ENCODE measurements at regions of chr2 and their contacts with region 1.

Region 1: GRCh38 chr2:219029829-219030165 is 11.5 kb downstream of the CFAP65 start:
- DNase-seq: peak; percentile 80
- H3K4me3 Mint-ChIP-seq: no peak overlapping the region
- H3K27ac Mint-ChIP-seq: no peak overlapping the region
- H3K4me1 Mint-ChIP-seq: no peaks in the 10 kb centered on the region
- H3K27me3 Mint-ChIP-seq: peaks cover 32% of the 10 kb centered on the region
- CTCF ChIP-seq: peak; percentile 95

Region 2: DNA sequence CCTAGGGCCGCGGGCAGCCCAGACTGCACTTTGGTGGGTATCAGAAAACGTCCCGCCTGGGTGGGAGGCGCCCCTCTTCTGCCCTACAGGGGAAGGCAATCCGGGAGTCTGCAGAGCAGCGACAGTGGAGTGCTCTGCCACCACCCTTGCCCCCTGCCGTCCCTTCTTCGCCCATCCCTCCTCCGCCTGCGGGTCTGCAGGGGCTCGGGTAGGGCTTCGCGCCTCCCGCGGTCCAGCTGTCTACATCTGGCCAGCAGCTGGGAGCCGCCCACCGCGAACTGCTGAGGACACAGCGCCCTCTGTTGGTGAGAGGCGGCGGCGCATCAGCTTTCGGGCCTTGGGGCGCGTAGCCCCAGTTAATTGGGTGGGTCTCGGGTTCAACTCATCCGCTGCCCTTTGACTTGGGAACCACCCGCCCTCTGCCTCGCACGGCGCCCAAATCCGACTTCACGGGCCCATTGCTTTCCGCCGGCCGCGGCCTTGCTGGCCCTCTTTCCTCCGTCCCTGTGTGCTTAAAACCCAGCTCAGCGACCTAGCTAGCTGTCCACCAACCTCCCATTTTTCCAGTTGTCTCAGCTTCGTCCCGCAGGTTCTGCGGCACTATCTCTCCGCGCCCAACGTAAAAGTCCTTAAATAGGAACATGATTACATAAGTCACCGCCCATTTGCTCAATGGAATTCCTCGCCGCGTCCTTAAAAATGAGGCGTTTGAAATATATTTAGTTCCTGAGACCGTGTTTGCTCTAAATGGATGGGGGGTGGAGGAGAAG is 131.5 kb before region 1 on chr2:
- CTCF ChIA-PET with region 1: no interaction called
- POLR2A ChIA-PET with region 1: no interaction called
- intact Hi-C with region 1: no loop called
- DNase-seq: peak; percentile 53
- H3K4me3 Mint-ChIP-seq: no peak overlapping the region
- H3K27ac Mint-ChIP-seq: no peak overlapping the region
- H3K4me1 Mint-ChIP-seq: peaks cover 43% of the 10 kb centered on the region
- H3K27me3 Mint-ChIP-seq: peaks cover 23% of the 10 kb centered on the region
- CTCF ChIP-seq: peak; percentile 97

Region 3: GRCh38 chr2:218995972-218996711 is 33.7 kb before region 1 on chr2:
- CTCF ChIA-PET with region 1: interaction called, 10 read pairs
- POLR2A ChIA-PET with region 1: interaction called, 3 read pairs
- intact Hi-C with region 1: loop called (anchors 1 kb)
- DNase-seq: peak; percentile 82
- H3K4me3 Mint-ChIP-seq: peak overlapping the region; percentile 73
- H3K27ac Mint-ChIP-seq: no peak overlapping the region
- H3K4me1 Mint-ChIP-seq: peaks cover 15% of the 10 kb centered on the region
- H3K27me3 Mint-ChIP-seq: peaks cover 22% of the 10 kb centered on the region
- CTCF ChIP-seq: peak; percentile 84

Region 4: GRCh38 chr2:219041252-219041651 is 11.5 kb after region 1 on chr2 and contains the start of gene CFAP65:
- CTCF ChIA-PET with region 1: interaction called, 22 read pairs
- POLR2A ChIA-PET with region 1: interaction called, 4 read pairs
- intact Hi-C with region 1: no loop called
- DNase-seq: no peak
- H3K4me3 Mint-ChIP-seq: peak within 1 kb of the TSS; percentile 72
- H3K27ac Mint-ChIP-seq: no peak within 1 kb of the TSS
- H3K4me1 Mint-ChIP-seq: peaks cover 6% of the 10 kb centered on the region
- H3K27me3 Mint-ChIP-seq: peaks cover 86% of the 10 kb centered on the region
- CTCF ChIP-seq: no peak
- total RNA-seq, gene CFAP65: not detected in 2 replicates

Region 5: DNA sequence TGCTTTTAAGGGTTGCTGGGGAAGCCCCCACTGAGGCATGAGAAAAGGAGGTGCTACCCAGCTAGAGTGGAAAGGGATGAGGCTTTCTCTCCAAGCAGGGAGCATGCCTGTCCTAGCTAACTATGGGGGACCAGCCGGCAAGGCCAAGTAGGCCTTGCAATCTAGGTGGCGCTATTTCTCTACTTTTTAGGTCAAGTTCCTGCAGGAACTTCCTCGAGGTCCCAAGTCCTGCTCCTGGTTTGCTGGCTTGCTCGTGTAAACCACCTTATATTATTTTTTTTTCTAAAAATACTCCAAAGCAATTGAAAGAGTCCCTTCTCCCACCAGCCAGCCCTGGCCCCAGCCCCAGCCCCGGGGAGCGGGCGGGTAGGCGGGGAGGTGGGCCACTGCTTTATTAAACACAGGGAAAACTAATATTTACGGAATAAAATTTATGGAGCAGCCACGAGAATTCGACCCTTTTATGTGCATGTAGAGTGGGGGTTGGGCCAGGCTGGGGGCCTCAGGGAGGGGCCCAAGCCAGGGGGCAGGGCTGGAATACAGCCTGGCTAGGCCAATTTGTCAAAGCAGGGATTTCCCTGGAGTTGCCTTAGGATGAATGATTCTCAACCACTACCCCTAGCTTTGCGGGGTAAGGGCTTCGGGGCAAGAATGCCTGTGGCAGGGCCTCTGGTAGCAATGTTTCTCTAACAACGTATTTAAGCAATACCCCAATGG is 43.8 kb after region 1 on chr2:
- CTCF ChIA-PET with region 1: interaction called, 21 read pairs
- POLR2A ChIA-PET with region 1: no interaction called
- intact Hi-C with region 1: no loop called
- DNase-seq: peak; percentile 57
- H3K4me3 Mint-ChIP-seq: no peak overlapping the region
- H3K27ac Mint-ChIP-seq: peak overlapping the region; percentile 7
- H3K4me1 Mint-ChIP-seq: peaks cover 13% of the 10 kb centered on the region
- H3K27me3 Mint-ChIP-seq: no peaks in the 10 kb centered on the region
- CTCF ChIP-seq: peak; percentile 57

Region 6: GRCh38 chr2:219142329-219142728 is 112.5 kb after region 1 on chr2:
- CTCF ChIA-PET with region 1: interaction called, 35 read pairs
- POLR2A ChIA-PET with region 1: no interaction called
- intact Hi-C with region 1: no loop called
- DNase-seq: peak; percentile 88
- H3K4me3 Mint-ChIP-seq: no peak overlapping the region
- H3K27ac Mint-ChIP-seq: peak overlapping the region; percentile 44
- H3K4me1 Mint-ChIP-seq: peaks cover 27% of the 10 kb centered on the region
- H3K27me3 Mint-ChIP-seq: no peaks in the 10 kb centered on the region
- CTCF ChIP-seq: no peak

Region 7: GRCh38 chr2:219160186-219161017 is 130.6 kb after region 1 on chr2 and contains the start of gene NHEJ1:
- CTCF ChIA-PET with region 1: interaction called, 178 read pairs
- POLR2A ChIA-PET with region 1: interaction called, 8 read pairs
- intact Hi-C with region 1: loop called (anchors 1 kb)
- DNase-seq: peak; percentile 95
- H3K4me3 Mint-ChIP-seq: peak within 1 kb of the TSS; percentile 77
- H3K27ac Mint-ChIP-seq: peak within 1 kb of the TSS; percentile 37
- H3K4me1 Mint-ChIP-seq: peaks cover 14% of the 10 kb centered on the region
- H3K27me3 Mint-ChIP-seq: no peaks in the 10 kb centered on the region
- CTCF ChIP-seq: peak; percentile 96
- total RNA-seq, gene NHEJ1: 7.5 and 11.5 TPM in 2 replicates

Region 8: DNA sequence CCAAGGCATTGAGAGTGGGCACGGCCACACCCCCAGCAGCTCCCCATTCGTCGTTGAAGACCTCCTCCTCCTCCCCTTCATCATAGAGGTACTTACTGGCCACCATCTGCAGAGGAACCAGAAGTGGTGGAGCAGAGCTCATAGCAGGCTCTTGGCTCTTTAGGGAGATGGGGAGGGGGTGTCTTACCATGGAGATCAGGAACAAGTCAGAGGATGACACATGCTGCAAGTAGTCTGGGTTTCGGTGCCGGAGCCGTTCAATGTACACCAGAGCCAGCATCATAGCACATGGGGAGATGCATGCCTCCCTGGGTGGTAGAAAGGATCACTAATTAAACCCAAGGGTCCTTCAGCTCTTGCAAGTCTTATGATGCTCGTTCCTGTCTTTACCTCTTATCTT is 145.0 kb after region 1 on chr2:
- CTCF ChIA-PET with region 1: no interaction called
- POLR2A ChIA-PET with region 1: no interaction called
- intact Hi-C with region 1: no loop called
- DNase-seq: no peak
- H3K4me3 Mint-ChIP-seq: no peak overlapping the region
- H3K27ac Mint-ChIP-seq: no peak overlapping the region
- H3K4me1 Mint-ChIP-seq: peaks cover 8% of the 10 kb centered on the region
- H3K27me3 Mint-ChIP-seq: no peaks in the 10 kb centered on the region
- CTCF ChIP-seq: no peak